ENCODE measurements at regions of chr13 and their contacts with region 1.

Region 1: GRCh38 chr13:36858290-36858689 is 39.3 kb downstream of the RFXAP start:
- DNase-seq: no peak
- ATAC-seq: peak; percentile 42 to 71 (median 58)
- H3K4me3 ChIP-seq: no peak overlapping the region
- H3K27ac ChIP-seq: no peak overlapping the region
- H3K4me1 ChIP-seq: no peaks in the 10 kb centered on the region
- H3K27me3 ChIP-seq: no peaks in the 10 kb centered on the region
- CTCF ChIP-seq: peak; percentile 41

Region 2: GRCh38 chr13:36789061-36789460 is 69.2 kb before region 1 on chr13:
- intact Hi-C with region 1: no loop called
- DNase-seq: no peak
- ATAC-seq: no peak
- H3K4me3 ChIP-seq: no peak overlapping the region
- H3K27ac ChIP-seq: no peak overlapping the region
- H3K4me1 ChIP-seq: no peaks in the 10 kb centered on the region
- H3K27me3 ChIP-seq: no peaks in the 10 kb centered on the region
- CTCF ChIP-seq: no peak

Region 3: DNA sequence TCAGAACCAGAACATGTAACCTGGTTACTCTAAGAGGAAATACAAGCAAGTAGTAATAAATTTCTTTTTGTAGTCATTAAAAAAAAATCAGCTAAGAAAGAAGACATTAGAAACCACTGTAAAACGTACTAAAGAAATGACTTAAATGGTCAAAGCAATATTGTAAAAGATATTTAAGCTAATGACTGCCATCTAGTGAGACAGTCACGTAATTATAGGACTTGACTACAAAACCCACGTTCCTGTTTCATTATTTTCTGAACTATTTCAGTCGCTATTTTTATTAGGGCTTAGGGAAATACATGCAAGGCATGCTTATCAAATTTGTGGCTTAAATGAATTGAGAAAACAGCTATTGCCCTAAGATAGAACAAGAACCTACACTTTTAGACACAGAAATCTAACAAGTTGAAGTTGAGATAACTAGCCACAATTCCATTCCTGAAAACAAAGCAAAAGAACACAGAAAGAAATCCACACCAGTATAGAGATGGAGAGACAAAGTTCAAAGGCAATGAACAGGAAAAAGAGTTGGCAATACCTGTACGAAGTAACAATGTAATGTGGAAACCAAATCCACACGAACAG is 123.0 kb after region 1 on chr13:
- intact Hi-C with region 1: loop called (anchors 2 to 10 kb)
- DNase-seq: no peak
- ATAC-seq: no peak
- H3K4me3 ChIP-seq: no peak overlapping the region
- H3K27ac ChIP-seq: no peak overlapping the region
- H3K4me1 ChIP-seq: no peaks in the 10 kb centered on the region
- H3K27me3 ChIP-seq: no peaks in the 10 kb centered on the region
- CTCF ChIP-seq: peak; percentile 60